ENCODE measurements at regions of chr10 and their contacts with region 1.

Region 1: DNA sequence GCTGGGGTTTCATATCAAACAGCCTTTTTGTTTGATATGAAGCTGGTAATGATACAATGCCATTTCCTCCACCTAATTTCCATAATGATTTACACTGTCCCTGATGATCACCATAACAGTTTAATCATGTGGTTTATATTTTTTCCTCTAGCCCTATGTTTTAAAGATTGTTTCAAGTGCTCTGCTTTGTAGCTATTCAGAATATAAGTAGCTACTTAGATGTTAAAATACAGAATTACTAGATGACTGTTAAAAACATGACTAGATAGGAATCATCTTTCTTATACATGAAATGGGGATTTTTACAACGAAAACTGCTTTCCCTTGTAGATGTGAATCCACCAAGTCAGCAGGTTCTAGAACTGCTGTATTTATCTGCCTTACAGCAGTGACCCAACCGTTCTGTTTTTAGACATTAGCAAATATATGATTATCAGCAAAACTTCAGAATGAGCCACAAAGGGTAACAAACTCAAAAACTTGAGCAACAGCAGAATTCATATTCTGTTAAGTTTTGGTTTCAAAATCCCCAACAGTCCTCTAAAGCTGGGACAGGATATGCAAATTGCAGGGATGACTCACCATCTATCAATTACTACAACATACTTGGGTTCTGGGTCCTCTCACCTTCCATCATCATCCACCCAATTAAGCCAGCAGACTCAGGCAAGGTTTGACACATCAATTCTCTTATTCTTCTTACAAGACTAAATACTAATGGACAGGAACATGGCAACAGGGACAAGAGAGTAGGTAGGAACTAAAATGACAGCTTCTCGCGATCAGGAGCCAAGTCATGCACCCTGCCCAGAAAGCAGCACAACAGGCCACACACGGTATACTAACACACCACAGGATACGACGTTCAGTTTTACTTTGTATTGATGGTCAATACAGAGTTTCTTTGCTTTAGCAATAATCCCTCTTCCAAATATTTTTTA is 83.9 kb downstream of the PIP4K2A start:
- DNase-seq: peak; percentile 56
- H3K4me3 Mint-ChIP-seq: peak overlapping the region; percentile 74
- H3K27ac Mint-ChIP-seq: peak overlapping the region; percentile 97
- H3K4me1 Mint-ChIP-seq: peaks cover 95% of the 10 kb centered on the region
- H3K27me3 Mint-ChIP-seq: no peaks in the 10 kb centered on the region

Region 2: GRCh38 chr10:22518167-22518724 is 112.3 kb before region 1 on chr10:
- CTCF ChIA-PET with region 1: no interaction called
- POLR2A ChIA-PET with region 1: no interaction called
- DNase-seq: no peak
- H3K4me3 Mint-ChIP-seq: no peak overlapping the region
- H3K27ac Mint-ChIP-seq: no peak overlapping the region
- H3K4me1 Mint-ChIP-seq: no peaks in the 10 kb centered on the region
- H3K27me3 Mint-ChIP-seq: peaks cover 51% of the 10 kb centered on the region

Region 3: DNA sequence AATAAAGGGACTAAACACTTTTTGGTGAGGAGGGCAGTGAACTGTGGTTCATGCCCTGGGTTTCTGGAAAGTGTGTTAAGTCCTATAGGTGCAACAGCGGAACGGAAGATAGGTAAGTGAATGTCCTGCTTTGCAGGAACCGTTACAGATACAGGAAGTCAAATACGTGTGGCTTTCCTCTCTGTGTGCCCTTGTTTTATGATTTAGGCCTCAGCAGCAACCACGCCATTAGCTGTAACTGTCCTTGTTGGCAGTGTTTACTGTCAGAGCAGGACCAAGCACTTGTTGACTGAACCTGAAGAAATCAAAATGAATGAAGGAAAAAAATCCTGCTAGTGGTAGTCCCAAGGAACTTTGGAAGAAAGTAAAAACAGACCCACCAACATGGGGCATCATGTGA is 66.4 kb before region 1 on chr10:
- CTCF ChIA-PET with region 1: no interaction called
- POLR2A ChIA-PET with region 1: no interaction called
- DNase-seq: no peak
- H3K4me3 Mint-ChIP-seq: no peak overlapping the region
- H3K27ac Mint-ChIP-seq: peak overlapping the region; percentile 69
- H3K4me1 Mint-ChIP-seq: peaks cover 26% of the 10 kb centered on the region
- H3K27me3 Mint-ChIP-seq: no peaks in the 10 kb centered on the region

Region 4: GRCh38 chr10:22606164-22606614 is 24.3 kb before region 1 on chr10:
- CTCF ChIA-PET with region 1: interaction called, 28 read pairs
- POLR2A ChIA-PET with region 1: interaction called, 198 read pairs
- DNase-seq: peak; percentile 59
- H3K4me3 Mint-ChIP-seq: peak overlapping the region; percentile 35
- H3K27ac Mint-ChIP-seq: peak overlapping the region; percentile 64
- H3K4me1 Mint-ChIP-seq: peaks cover 78% of the 10 kb centered on the region
- H3K27me3 Mint-ChIP-seq: no peaks in the 10 kb centered on the region

Region 5: DNA sequence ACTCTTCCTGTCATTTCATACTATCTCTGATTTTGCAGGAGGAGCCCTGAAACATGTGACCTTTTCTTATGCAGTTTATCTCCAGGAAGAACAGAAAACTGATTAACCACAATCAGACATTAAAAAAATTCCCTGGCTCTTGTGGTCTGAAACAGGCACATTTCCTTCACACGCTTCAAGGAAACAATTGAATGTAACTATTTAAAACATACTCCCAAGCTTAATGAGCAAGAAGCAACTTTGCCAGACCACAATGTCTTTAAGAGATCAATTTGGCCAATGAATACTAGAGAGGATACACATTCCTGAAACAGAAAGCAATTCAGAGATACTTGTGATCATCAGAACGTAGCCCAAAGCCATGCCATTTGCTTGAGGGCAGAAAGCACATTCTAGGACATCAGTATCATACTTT is 18.1 kb after region 1 on chr10:
- CTCF ChIA-PET with region 1: interaction called, 7 read pairs
- POLR2A ChIA-PET with region 1: interaction called, 95 read pairs
- DNase-seq: no peak
- H3K4me3 Mint-ChIP-seq: peak overlapping the region; percentile 66
- H3K27ac Mint-ChIP-seq: peak overlapping the region; percentile 91
- H3K4me1 Mint-ChIP-seq: peaks cover 91% of the 10 kb centered on the region
- H3K27me3 Mint-ChIP-seq: no peaks in the 10 kb centered on the region

Region 6: DNA sequence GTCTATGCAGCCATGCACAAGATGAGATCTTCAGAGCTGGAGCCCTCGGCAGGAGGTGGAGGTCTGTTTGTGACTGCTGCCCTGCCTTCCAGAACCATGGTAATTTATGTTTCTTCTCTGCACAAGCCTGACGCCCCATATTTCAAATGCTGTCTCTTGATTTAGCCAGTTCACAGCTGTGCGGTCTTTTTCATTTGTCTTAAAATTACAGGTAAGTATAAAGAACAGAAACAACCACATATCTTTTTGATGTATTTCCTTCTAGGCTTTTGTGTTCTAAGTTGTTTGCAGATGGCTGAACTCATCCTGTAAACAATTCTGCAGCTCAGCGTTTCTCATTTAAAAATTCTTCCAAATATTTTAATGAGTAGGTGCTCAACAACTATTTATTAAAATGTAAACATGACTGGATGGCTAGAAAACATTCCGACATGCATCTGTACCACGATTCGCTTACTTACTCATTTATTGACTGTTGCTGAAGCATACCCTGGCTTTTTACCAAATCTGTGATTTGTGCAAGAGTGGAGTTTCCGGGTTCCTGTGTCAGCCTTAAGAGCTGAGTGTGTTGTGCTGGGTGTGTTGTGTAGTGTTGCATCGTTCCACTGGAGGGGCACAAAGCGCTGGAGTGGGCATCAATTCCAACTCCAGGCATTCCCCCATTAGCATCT is 24.9 kb after region 1 on chr10:
- CTCF ChIA-PET with region 1: interaction called, 14 read pairs
- POLR2A ChIA-PET with region 1: interaction called, 95 read pairs
- DNase-seq: no peak
- H3K4me3 Mint-ChIP-seq: peak overlapping the region; percentile 36
- H3K27ac Mint-ChIP-seq: peak overlapping the region; percentile 85
- H3K4me1 Mint-ChIP-seq: peaks cover 94% of the 10 kb centered on the region
- H3K27me3 Mint-ChIP-seq: no peaks in the 10 kb centered on the region

Region 7: GRCh38 chr10:22666287-22667092 is 36.0 kb after region 1 on chr10:
- CTCF ChIA-PET with region 1: interaction called, 3 read pairs
- POLR2A ChIA-PET with region 1: interaction called, 12 read pairs
- DNase-seq: peak; percentile 67
- H3K4me3 Mint-ChIP-seq: peak overlapping the region; percentile 77
- H3K27ac Mint-ChIP-seq: peak overlapping the region; percentile 92
- H3K4me1 Mint-ChIP-seq: peaks cover 75% of the 10 kb centered on the region
- H3K27me3 Mint-ChIP-seq: no peaks in the 10 kb centered on the region

Region 8: DNA sequence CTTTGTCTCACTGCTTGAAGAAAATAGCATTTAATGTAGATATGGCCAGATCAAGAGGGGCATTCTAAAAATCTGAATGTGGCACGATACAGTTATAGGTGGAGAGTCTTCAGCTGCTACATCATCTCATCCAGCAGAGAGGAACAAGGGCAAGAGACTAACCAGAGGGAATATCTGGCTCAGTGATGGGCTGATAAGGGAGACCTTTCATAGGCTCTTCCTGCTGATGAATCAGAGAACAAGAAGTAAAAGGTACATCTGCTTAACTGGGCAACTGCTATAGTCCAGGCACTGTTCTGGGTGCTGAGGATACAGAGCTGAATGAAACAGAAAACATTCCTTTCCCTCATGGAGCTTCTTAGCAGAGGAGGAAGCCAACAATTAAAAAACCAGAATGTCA is 45.9 kb after region 1 on chr10:
- CTCF ChIA-PET with region 1: interaction called, 5 read pairs
- POLR2A ChIA-PET with region 1: interaction called, 32 read pairs
- DNase-seq: no peak
- H3K4me3 Mint-ChIP-seq: no peak overlapping the region
- H3K27ac Mint-ChIP-seq: no peak overlapping the region
- H3K4me1 Mint-ChIP-seq: peaks cover 86% of the 10 kb centered on the region
- H3K27me3 Mint-ChIP-seq: no peaks in the 10 kb centered on the region

Region 9: GRCh38 chr10:22682237-22683139 is 52.0 kb after region 1 on chr10:
- CTCF ChIA-PET with region 1: interaction called, 5 read pairs
- POLR2A ChIA-PET with region 1: interaction called, 32 read pairs
- DNase-seq: peak; percentile 77
- H3K4me3 Mint-ChIP-seq: peak overlapping the region; percentile 69
- H3K27ac Mint-ChIP-seq: peak overlapping the region; percentile 100
- H3K4me1 Mint-ChIP-seq: peaks cover 86% of the 10 kb centered on the region
- H3K27me3 Mint-ChIP-seq: no peaks in the 10 kb centered on the region

Region 10: DNA sequence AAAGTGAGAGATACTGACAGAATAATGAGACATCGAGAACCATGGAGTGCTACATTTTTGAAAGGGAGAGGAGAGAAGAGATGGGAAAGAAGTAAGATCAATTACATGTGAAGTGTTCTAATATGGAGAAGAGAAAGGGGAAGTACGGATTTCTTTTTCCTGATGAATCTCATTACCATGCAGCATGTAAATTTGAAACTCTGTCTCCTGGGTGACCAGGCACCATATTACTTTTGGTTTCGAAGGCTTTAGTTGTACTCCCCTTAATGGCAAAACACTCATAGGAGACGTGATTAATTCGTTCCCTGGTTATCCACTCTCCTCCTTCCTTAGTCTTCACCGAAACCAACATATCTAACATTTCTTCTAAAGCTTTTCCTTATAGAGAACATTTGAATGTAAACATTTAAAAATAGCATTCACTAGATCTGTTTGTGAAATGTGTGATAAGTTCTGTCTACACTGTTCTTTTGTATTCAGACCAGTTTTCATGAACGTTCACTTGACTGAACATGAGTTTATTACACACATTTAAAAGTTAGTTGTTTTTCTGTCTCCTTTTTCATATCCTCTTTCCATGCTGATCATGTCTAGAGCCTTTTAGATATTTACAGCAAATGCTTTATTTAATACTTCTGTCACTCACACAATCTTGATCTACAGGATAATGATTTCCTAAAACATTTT is 384.7 kb after region 1 on chr10:
- CTCF ChIA-PET with region 1: no interaction called
- POLR2A ChIA-PET with region 1: no interaction called
- DNase-seq: no peak
- H3K4me3 Mint-ChIP-seq: no peak overlapping the region
- H3K27ac Mint-ChIP-seq: no peak overlapping the region
- H3K4me1 Mint-ChIP-seq: no peaks in the 10 kb centered on the region
- H3K27me3 Mint-ChIP-seq: peaks cover 11% of the 10 kb centered on the region